HEK293 (cell line): ENCODE measurements at regions of chr16 and their contacts with region 1.

Region 1: DNA sequence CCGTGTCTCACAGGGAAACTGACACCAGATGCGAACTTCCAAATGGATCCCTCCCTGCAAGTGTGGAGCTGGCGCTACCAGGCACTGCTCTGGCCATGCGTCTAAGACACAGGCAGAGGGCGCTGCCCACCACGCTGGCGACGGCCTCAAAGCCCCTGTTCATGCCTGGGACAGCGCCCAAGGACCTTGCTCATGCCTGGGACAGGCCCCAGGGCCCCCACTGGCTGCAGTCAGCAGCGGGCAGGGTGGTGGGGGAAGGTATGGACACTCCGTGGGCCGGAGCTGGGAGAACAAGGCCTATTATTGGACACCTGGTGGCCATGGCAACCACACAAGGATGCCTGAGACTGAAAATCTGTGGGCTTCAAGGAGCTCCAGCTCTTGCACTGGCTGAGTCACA is 8.8 kb downstream of the ZG16B start:
- H3K4me3 ChIP-seq: no peak overlapping the region
- H3K27ac ChIP-seq: no peak overlapping the region
- H3K4me1 ChIP-seq: no peaks in the 10 kb centered on the region
- CTCF ChIP-seq: peak; percentile 95

Region 2: DNA sequence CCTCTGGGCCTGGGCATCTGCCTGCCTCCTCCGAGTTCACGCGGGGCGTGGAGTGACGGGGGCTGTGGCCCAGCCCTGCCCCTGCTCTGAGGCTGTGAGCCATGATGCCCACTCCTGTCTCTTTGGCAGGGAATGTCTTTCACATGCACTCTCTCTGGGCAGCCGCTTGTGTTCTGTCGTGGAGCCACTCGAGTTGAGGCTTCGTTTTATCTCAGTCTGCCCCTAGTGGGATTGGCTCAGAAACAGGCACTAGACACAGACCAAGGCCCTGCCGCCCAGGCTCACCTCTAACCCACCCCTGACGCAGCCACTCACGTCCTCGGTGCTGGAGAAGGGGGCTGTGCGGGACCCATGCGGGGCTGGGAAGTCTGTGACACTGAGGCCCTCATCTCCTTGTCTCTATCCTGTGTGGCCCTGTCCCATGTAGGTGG is 224.2 kb before region 1 on chr16:
- CTCF ChIA-PET with region 1: no interaction called
- POLR2A ChIA-PET with region 1: no interaction called
- H3K4me3 ChIP-seq: no peak overlapping the region
- H3K27ac ChIP-seq: no peak overlapping the region
- H3K4me1 ChIP-seq: no peaks in the 10 kb centered on the region
- CTCF ChIP-seq: no peak

Region 3: DNA sequence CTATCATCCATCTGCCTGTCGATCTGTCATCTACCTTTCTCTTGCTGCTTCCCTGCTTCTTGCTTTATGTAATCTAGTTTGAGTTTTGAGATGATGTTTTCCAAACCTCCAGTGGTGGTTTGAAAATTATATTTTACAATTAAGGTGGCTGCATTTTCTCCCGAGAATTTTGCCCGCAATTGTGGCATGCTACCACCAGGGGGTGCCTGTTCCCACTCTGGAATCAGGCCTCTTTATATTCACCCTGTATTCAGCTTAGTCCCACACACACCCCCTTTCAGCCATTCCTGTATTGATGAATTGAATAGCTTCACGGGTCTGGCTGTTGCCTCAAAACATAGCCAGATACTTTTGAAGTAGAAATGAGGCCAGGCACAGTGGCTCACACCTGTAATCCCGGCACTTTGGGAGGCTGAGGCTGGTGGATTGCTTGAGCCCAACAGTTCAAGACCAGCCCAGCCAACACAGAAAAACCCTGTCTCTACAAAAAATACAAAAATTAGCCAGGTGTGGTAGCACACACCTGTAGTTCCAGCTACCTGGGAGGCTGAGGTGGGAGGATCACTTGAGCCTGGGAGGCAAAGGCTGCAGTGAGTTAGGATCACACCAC is 15.9 kb after region 1 on chr16:
- CTCF ChIA-PET with region 1: interaction called, 17 read pairs
- POLR2A ChIA-PET with region 1: interaction called, 3 read pairs
- H3K4me3 ChIP-seq: no peak overlapping the region
- H3K27ac ChIP-seq: no peak overlapping the region
- H3K4me1 ChIP-seq: no peaks in the 10 kb centered on the region
- CTCF ChIP-seq: no peak

Region 4: DNA sequence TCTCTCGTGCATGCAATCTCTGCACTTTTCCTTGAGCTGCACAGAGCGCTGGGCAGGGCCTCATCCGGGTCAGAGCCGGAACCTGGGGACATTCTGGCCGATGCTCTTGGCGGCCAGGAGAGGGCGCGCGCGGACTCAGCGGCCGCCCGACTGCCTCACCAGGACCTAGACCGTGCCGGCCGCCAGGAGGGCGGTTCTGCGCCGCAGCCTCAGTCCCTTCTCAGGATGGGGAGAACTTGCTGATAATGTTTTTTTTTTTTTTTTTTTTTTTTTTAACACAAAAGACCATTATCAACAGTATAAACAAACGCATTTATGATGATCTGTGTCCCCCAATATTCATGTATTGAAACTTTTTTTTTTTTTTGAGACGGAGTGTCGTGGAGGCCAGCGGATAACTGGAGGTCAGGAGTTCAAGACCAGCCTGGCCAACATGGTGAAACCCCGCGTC is 36.0 kb after region 1 on chr16:
- CTCF ChIA-PET with region 1: interaction called, 11 read pairs
- POLR2A ChIA-PET with region 1: no interaction called
- H3K4me3 ChIP-seq: no peak overlapping the region
- H3K27ac ChIP-seq: no peak overlapping the region
- H3K4me1 ChIP-seq: no peaks in the 10 kb centered on the region; the same call in 1 of the 2 replicates
- CTCF ChIP-seq: peak; percentile 95

Region 5: DNA sequence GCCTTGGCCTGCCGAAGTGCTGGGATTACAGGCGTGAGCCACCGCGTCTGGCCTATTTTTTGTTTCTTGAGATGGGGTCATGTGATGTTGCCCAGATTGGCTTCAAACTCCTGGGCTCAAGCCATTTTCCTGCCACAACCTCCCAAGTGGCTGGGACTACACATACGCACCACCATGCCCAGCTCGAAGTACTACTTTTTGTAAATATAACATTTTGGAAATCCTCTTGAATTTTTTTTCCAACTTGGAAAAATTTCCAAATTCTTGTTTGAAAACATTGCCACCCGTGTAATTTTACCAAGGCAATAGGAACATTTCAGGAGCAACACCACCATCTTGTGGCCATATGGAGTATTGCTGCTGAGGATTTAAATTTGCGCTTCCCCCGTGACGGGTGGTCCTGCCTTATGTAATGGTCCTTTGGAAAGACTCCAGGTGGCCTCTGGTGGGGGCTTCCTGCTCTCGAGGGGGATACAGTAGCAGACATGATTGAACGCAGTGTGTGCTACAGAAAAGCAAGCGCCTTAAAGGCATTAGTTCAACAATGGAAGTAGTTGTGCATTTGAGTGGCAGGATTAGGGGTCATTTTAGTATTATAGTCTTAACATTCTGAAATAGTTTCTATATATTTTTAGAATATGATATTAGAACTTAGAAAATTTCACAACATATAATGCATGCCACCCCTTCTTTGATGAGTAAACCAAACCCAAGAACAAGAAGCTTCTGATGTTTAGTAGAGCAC is 80.8 kb after region 1 on chr16:
- CTCF ChIA-PET with region 1: interaction called, 24 read pairs
- POLR2A ChIA-PET with region 1: no interaction called
- H3K4me3 ChIP-seq: no peak overlapping the region
- H3K27ac ChIP-seq: no peak overlapping the region
- H3K4me1 ChIP-seq: 0 out of 2 replicates have a peak, but pooled peaks cover 4% of the 10 kb centered on the region
- CTCF ChIP-seq: peak; percentile 60; the same call in 1 of the 2 replicates